ENCODE measurements at regions of chr16 and their contacts with region 1.

Region 1: DNA sequence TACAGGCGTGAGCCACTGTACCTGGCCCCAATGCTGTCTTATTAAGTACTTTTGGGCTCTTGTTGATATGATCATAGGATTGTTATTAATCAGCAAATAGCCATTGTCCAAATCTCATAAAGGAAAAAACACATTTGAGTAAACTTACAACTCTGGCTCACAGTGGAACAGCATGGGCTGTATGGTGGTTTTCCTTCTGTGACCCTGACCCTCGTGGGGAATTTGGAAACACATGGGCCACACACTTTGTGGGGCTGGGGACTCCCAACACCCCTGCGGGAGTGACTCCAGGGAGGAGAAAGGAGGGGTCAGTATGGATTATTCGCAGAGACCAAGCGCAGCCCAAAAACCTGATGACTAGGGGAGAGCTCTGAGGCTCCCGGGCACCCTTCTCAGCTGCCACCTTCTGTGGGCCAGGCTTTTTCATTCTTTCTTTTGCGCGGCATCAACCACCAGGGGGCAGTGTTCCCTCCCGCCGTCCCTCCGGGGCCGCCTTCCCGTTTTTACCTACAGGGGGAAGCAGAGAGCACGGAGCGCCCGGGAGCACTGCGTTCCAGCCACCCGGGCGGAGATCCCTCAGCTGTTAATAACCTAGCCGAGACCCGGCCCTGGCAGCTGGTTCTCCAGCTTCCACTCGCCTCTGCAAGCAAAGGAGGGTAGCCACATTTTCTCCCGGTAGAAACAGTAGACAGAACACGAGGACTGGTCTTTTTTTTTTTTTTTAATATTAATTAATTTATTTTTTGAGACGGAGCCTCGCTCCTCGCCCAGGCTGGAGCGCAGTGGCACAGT is 9.7 kb downstream of the TSNAXIP1 start:
- DNase-seq: peak; percentile 95
- ATAC-seq: peak; percentile 99
- H3K4me3 Mint-ChIP-seq: no peak overlapping the region
- H3K27ac Mint-ChIP-seq: peak overlapping the region; percentile 67
- H3K4me1 Mint-ChIP-seq: peaks cover 2% of the 10 kb centered on the region
- H3K27me3 Mint-ChIP-seq: no peaks in the 10 kb centered on the region

Region 2: DNA sequence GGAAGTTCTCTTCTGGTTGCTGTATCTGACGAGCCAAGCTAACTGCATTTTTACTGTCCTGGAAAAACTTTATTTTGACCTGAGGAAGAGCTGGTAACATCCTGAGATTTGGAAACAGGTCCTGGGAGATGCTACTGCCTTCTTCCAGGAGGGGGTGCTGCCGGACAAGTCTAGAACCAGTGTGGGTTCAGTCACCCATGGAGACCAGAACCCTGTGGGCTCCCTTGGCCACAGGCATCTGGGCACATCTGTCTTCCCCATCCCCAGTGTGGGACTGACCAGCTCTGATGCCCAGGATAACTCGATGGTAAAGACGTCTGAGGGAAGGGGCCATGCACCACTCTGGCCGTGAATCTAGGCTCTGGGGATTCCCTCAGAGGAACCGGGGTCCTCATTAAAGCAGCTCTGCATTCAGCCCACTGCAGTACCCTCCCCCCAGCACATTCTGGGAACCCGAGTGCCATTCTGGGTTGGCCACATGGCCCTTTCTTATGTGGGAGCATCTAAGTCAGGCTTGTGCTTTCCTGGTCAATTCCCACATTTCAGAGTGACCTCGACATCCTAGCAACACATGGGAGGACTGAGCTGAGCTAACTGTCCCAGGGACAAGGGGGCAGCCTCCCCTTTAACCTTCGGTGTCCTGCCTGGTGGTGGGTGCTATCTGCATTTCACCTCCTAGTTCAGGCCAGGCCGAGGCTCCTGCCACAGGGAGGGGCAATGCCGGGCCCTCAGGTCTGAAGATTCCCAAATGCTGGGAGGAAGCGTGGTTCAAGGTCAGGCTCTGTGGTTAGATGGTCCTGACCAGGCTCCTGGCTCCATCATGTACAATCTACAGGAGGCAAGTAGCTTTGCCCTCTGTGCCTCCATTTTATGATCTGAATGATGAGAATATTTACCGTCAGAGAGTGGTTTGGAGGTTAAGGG is 143.4 kb before region 1 on chr16:
- CTCF ChIA-PET with region 1: interaction called, 5 read pairs
- POLR2A ChIA-PET with region 1: no interaction called
- intact Hi-C with region 1: loop called in 1 of 2 experiments (anchors 1 kb)
- DNase-seq: peak; percentile 77
- ATAC-seq: peak; percentile 25
- H3K4me3 Mint-ChIP-seq: no peak overlapping the region
- H3K27ac Mint-ChIP-seq: no peak overlapping the region
- H3K4me1 Mint-ChIP-seq: peaks cover 3% of the 10 kb centered on the region
- H3K27me3 Mint-ChIP-seq: no peaks in the 10 kb centered on the region

Region 3: DNA sequence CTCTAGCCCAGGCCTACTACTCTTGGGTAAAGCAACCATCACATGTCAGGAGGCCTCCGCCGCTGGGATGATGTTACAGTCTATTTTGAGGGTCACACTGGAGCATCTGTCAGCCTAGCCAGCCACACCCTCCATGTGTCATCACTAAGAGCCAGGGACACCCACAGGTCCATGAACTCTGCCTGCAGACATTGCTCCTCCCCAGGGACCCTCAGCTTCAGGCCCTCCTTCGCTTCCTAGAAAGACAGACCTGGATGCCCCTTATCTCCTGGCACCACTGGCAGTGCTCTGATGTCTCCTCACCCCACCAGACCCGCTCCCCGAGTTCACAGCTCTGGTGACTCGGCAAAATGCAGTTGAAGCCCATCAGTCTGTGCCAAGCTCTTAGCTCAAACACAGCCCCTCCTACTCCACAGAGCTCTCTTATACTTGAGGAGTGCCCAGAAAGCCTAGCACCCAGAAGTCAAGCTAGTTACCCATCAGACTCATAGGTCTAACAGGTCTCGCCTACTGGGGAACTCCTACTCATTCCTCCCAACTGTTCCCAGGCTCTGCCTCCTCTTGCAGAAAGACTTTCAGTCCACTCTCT is 16.0 kb before region 1 on chr16:
- CTCF ChIA-PET with region 1: interaction called, 47 read pairs
- POLR2A ChIA-PET with region 1: no interaction called
- intact Hi-C with region 1: no loop called
- DNase-seq: no peak
- ATAC-seq: no peak
- H3K4me3 Mint-ChIP-seq: no peak overlapping the region
- H3K27ac Mint-ChIP-seq: peak overlapping the region; percentile 26
- H3K4me1 Mint-ChIP-seq: peaks cover 60% of the 10 kb centered on the region
- H3K27me3 Mint-ChIP-seq: no peaks in the 10 kb centered on the region

Region 4: GRCh38 chr16:67865316-67865715 is 48.9 kb after region 1 on chr16:
- CTCF ChIA-PET with region 1: interaction called, 22 read pairs
- POLR2A ChIA-PET with region 1: no interaction called
- intact Hi-C with region 1: loop called (anchors 1 kb)
- DNase-seq: peak; percentile 46
- ATAC-seq: peak; percentile 70
- H3K4me3 Mint-ChIP-seq: no peak overlapping the region
- H3K27ac Mint-ChIP-seq: no peak overlapping the region
- H3K4me1 Mint-ChIP-seq: no peaks in the 10 kb centered on the region
- H3K27me3 Mint-ChIP-seq: no peaks in the 10 kb centered on the region

Region 5: DNA sequence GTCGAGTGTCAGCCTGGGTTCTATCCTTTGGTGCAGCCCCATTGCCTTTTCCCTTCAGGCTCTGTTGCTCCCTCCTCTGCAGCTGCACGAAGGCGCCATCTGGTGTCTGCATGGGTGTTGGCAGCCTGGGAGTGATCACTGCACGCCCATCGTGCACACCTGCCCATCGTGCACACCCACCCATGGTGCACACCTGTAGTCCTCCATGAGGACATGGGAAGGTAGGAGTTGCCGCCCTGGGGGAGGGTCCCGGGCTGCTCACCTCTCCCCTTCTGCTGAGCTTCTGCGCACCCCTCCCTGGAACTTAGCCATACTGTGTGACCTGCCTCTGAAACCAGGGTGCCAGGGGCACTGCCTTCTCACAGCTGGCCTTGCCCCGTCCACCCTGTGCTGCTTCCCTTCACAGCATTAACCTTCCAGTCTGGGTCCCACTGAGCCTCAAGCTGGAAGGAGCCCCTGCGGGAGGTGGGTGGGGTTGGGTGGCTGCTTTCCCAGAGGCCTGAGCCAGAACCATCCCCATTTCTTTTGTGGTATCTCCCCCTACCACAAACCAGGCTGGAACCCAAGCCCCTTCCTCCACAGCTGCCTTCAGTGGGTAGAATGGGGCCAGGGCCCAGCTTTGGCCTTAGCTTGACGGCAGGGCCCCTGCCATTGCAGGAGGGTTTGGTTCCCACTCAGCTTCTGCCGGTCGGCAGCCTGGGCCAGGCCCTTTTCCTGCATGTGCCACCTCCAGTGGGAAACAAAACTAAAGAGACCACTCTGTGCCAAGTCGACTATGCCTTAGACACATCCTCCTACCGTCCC is 112.3 kb after region 1 on chr16:
- CTCF ChIA-PET with region 1: interaction called, 7 read pairs
- POLR2A ChIA-PET with region 1: no interaction called
- intact Hi-C with region 1: loop called (anchors 1 kb)
- DNase-seq: peak; percentile 89
- ATAC-seq: peak; percentile 92
- H3K4me3 Mint-ChIP-seq: no peak overlapping the region
- H3K27ac Mint-ChIP-seq: no peak overlapping the region
- H3K4me1 Mint-ChIP-seq: no peaks in the 10 kb centered on the region
- H3K27me3 Mint-ChIP-seq: no peaks in the 10 kb centered on the region

Region 6: DNA sequence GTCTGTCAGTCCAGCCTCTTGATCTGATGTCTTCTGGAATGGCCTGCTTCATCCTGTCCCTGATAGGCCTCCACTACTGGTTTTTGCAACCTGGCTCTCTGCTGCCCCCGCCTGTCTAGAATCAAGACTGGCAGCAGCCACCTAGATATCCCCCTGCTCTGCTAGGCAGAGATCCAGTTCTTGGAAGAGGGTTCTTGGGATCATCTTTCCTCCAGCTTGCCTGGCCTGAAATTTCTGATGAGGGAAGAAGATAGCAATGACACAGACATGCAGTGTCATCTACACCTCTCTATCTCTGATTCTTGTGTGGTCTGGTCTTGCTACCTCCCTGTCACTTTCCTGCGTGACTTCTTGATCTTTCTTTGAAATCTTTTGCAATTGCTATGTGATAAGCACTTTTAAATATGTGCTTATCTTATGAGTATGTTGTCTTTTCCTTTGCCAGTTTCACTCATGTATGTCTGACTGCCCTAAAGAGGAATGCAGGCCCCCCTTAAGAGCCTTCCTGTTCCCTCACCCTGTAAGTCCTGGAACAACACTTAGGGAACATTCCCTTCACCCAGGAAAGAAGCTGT is 248.4 kb after region 1 on chr16:
- CTCF ChIA-PET with region 1: interaction called, 4 read pairs
- POLR2A ChIA-PET with region 1: no interaction called
- intact Hi-C with region 1: loop called in 1 of 2 experiments (anchors 2 kb)
- DNase-seq: peak; percentile 85
- ATAC-seq: peak; percentile 81
- H3K4me3 Mint-ChIP-seq: no peak overlapping the region
- H3K27ac Mint-ChIP-seq: peak overlapping the region; percentile 69
- H3K4me1 Mint-ChIP-seq: peaks cover 67% of the 10 kb centered on the region
- H3K27me3 Mint-ChIP-seq: no peaks in the 10 kb centered on the region